Breast epithelium (tissue), 4 donors: ENCODE measurements at regions of chr1 and their contacts with region 1.

Region 1: GRCh38 chr1:68065766-68066165 is 15.3 kb upstream of the DIRAS3 start:
- DNase-seq: no peak
- H3K4me3 ChIP-seq: no peak overlapping the region
- H3K27ac ChIP-seq: no peak overlapping the region
- H3K4me1 ChIP-seq: no peaks in the 10 kb centered on the region
- H3K27me3 ChIP-seq: no peaks in the 10 kb centered on the region
- CTCF ChIP-seq: no peak
- POLR2A ChIP-seq: no peak

Region 2: GRCh38 chr1:67991546-67991945 is 74.2 kb before region 1 on chr1:
- intact Hi-C with region 1: no loop called
- DNase-seq: no peak
- H3K4me3 ChIP-seq: no peak overlapping the region
- H3K27ac ChIP-seq: no peak overlapping the region
- H3K4me1 ChIP-seq: no peaks in the 10 kb centered on the region
- H3K27me3 ChIP-seq: no peaks in the 10 kb centered on the region
- CTCF ChIP-seq: no peak
- POLR2A ChIP-seq: no peak

Region 3: DNA sequence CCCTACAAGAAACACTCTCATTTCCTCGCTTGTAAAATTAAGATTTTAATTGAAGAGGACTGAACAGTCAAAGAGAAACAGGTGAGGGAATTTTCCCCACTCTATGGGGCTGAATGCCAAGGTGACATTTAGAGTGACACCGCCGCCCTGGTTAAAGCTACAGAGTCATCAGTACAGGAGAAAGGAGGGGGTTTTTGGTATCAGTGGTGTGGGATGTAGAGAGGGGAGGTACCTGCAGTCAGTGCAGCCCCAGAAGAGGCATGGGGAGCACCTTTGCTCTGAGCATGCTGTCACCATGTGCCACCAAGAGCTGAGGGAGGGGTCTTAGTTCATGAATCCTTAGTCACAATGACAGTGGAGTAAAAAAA is 18.1 kb before region 1 on chr1:
- intact Hi-C with region 1: loop called (anchors 1 kb)
- DNase-seq: no peak
- H3K4me3 ChIP-seq: no peak overlapping the region
- H3K27ac ChIP-seq: no peak overlapping the region
- H3K4me1 ChIP-seq: no peaks in the 10 kb centered on the region
- H3K27me3 ChIP-seq: no peaks in the 10 kb centered on the region
- CTCF ChIP-seq: no peak
- POLR2A ChIP-seq: no peak